ENCODE measurements at regions of chr19 and their contacts with region 1.

Region 1: DNA sequence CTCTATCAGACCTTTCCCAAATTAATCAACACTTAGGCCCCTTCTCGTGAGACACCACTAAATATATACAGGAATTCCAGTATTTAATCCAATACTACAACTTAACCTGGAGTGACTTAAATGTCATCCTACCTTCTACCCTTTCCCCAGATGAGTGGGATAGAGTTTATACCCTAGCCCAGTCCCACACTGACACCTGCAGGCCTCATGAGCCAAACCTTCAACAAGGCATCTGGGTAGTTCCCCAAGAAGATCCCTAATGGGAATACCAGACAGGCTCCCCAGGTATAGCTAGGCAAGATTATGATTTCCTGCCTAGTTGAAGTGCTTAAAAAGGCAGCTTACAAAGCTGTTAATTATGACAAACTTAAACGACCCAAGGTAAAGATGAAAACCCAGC is 15.9 kb downstream of the ZNF83 start:
- DNase-seq: no peak
- H3K4me3 ChIP-seq: no peak overlapping the region
- H3K27ac ChIP-seq: no peak overlapping the region
- H3K4me1 ChIP-seq: no peaks in the 10 kb centered on the region
- H3K27me3 ChIP-seq: no peaks in the 10 kb centered on the region
- CTCF ChIP-seq: no peak
- POLR2A ChIP-seq: no peak

Region 2: GRCh38 chr19:52566588-52567339 is 55.5 kb before region 1 on chr19:
- intact Hi-C with region 1: no loop called
- DNase-seq: no peak
- H3K4me3 ChIP-seq: no peak overlapping the region
- H3K27ac ChIP-seq: no peak overlapping the region
- H3K4me1 ChIP-seq: peaks cover 20% of the 10 kb centered on the region
- H3K27me3 ChIP-seq: no peaks in the 10 kb centered on the region
- CTCF ChIP-seq: no peak
- POLR2A ChIP-seq: no peak

Region 3: GRCh38 chr19:52670046-52670445 is 47.8 kb after region 1 on chr19:
- intact Hi-C with region 1: loop called (anchors 1 kb)
- DNase-seq: no peak
- H3K4me3 ChIP-seq: no peak overlapping the region
- H3K27ac ChIP-seq: no peak overlapping the region
- H3K4me1 ChIP-seq: no peaks in the 10 kb centered on the region
- H3K27me3 ChIP-seq: no peaks in the 10 kb centered on the region
- CTCF ChIP-seq: no peak
- POLR2A ChIP-seq: no peak

Region 4: GRCh38 chr19:53867225-53868090 is 1245.2 kb after region 1 on chr19 and contains the start of gene MYADM:
- intact Hi-C with region 1: no loop called
- DNase-seq: peak in 1 of 2 donors; percentile 99
- H3K4me3 ChIP-seq: peak within 1 kb of the TSS; percentile 66 to 96
- H3K27ac ChIP-seq: peak within 1 kb of the TSS; percentile 95
- H3K4me1 ChIP-seq: peaks cover 60% of the 10 kb centered on the region
- H3K27me3 ChIP-seq: no peaks in the 10 kb centered on the region
- CTCF ChIP-seq: no peak
- POLR2A ChIP-seq: peak in 1 of 2 donors; percentile 84
- total RNA-seq, gene MYADM: 68.3 TPM